KBM-7 (cell line): ENCODE measurements at regions of chr16 and their contacts with region 1.

Region 1: DNA sequence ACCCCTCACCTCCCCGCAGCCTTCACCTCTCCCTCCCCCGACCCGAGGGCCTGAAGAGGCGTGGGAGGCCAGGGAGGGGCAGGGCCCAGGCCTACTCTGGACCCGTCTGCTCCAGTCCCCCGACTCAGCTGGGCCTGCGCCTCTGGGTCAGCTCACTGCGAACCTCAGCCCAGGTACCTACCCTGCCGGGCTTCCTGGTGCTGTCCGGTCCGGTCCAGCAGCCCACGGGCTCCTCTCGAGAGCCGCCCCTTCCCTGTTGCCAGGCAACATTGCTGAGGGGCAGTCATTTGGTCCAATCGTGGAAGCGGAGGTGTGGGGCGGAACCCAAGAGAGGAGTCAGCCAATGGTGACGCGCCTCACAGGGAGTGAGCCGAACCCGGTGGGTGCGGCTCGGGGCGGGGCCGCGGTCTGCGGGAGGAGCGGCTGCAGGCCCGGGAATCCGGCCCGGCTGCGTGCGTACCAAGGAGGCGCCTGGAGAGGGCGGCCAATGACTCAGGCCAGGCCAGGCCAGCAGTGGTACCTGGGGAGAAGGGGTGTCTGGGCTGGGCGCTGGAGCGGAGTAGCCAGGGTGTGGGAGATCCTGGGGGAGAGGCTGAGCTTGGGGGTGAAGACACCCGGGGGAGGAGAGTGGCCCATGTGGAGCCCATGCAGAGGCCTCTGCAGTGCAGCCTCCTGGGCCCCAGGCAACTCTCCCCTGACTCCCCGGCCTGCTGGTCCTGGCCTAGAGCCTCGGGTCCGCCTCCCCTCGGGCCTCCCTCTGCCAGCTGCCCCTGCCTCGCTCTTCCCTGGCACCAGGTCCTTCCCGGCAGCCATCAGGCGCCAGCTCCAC is at the start of gene MEAK7:
- DNase-seq: peak; percentile 98

Region 2: GRCh38 chr16:84699712-84700445 is 195.2 kb after region 1 on chr16 and contains the start of gene USP10:
- in situ Hi-C with region 1: loop called (anchors 25 kb)
- DNase-seq: peak; percentile 65

Region 3: GRCh38 chr16:84952335-84953189 is 447.9 kb after region 1 on chr16:
- in situ Hi-C with region 1: loop called (anchors 25 kb)
- DNase-seq: peak; percentile 83